Spleen (tissue), 13 donors: ENCODE measurements at regions of chr1 and their contacts with region 1.

Region 1: DNA sequence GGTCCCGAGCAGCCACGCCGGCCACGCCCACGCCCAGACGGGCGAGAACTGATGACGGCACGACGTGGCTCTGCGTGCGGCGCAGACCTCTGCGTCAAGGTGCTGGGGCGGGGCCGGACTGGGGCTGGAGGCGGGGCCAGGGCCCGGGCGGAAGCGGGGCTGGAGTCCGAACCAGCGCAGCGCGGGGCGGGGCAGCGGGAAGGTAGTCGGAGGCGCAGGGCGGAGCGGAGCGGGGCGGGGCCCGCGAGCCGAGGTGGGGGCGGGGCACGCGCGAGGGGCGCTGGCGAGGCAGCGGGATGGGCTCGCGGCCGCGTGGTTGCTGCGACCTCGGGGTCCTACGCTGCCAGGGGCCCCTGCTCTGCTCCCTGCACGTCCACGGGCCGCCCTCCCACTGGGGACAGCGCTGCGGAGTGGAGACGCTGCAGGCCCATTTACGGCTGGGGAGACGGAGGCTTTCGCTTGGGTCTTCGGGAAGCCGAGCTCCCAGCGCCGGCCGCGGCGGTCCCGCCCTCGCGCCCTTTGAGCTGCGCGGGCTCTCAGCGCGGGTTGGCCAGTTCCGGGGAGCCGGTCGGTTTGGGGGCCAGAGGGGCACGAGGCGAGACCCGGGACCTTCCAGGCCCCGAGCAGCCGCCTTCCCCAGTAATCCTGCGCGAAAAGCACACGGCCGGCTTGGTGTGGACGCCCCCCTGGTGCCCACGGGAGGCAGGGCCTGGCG is at the start of gene PEX10:
- DNase-seq: peak; percentile 100
- H3K4me3 ChIP-seq: peak within 1 kb of the TSS; percentile 75 to 97 (median 86)
- H3K27ac ChIP-seq: peak within 1 kb of the TSS; percentile 82 to 93 (median 89)
- H3K4me1 ChIP-seq: peaks cover 29 to 73% (median 53%) of the 10 kb centered on the region in 6 donors
- H3K27me3 ChIP-seq: peaks cover 0 to 27% (median 2%) of the 10 kb centered on the region in 7 donors
- CTCF ChIP-seq: peak in 2 of 11 experiments; percentile 21 to 43
- POLR2A ChIP-seq: peak in 2 of 3 donors; percentile 2 to 86
- total RNA-seq, gene PEX10: 10.2 to 18.9 (median 16.3) TPM

Region 2: GRCh38 chr1:2545759-2546514 is 133.3 kb after region 1 on chr1:
- intact Hi-C with region 1: loop called (anchors 5 kb)
- DNase-seq: peak; percentile 97
- H3K4me3 ChIP-seq: peak overlapping the region; percentile 59 to 93 (median 86)
- H3K27ac ChIP-seq: peak overlapping the region; percentile 92 to 99 (median 98)
- H3K4me1 ChIP-seq: peaks cover 30 to 100% (median 82%) of the 10 kb centered on the region in 6 donors
- H3K27me3 ChIP-seq: peaks cover 0 to 28% (median 6%) of the 10 kb centered on the region in 7 donors
- CTCF ChIP-seq: peak in 1 of 11 experiments; percentile 19
- POLR2A ChIP-seq: peak; percentile 70 to 95 (median 89)

Region 3: GRCh38 chr1:2786329-2787162 is 373.9 kb after region 1 on chr1:
- intact Hi-C with region 1: loop called (anchors 5 kb)
- DNase-seq: peak; percentile 90
- H3K4me3 ChIP-seq: no peak overlapping the region
- H3K27ac ChIP-seq: no peak overlapping the region
- H3K4me1 ChIP-seq: peaks cover 0 to 26% (median 5%) of the 10 kb centered on the region in 6 donors
- H3K27me3 ChIP-seq: peaks cover 4 to 68% (median 48%) of the 10 kb centered on the region in 7 donors
- CTCF ChIP-seq: peak; percentile 46 to 91 (median 73)
- POLR2A ChIP-seq: no peak